ENCODE measurements at regions of chr17 and their contacts with region 1.

Region 1: GRCh38 chr17:71535026-71535720 is 585.6 kb upstream of the SOX9 start:
- DNase-seq: no peak
- ATAC-seq: no peak
- H3K4me3 ChIP-seq: no peak overlapping the region
- H3K27ac ChIP-seq: no peak overlapping the region
- H3K4me1 ChIP-seq: no peaks in the 10 kb centered on the region
- H3K27me3 ChIP-seq: peaks cover 0 to 4% (median 0%) of the 10 kb centered on the region in 3 donors
- CTCF ChIP-seq: no peak
- POLR2A ChIP-seq: no peak

Region 2: DNA sequence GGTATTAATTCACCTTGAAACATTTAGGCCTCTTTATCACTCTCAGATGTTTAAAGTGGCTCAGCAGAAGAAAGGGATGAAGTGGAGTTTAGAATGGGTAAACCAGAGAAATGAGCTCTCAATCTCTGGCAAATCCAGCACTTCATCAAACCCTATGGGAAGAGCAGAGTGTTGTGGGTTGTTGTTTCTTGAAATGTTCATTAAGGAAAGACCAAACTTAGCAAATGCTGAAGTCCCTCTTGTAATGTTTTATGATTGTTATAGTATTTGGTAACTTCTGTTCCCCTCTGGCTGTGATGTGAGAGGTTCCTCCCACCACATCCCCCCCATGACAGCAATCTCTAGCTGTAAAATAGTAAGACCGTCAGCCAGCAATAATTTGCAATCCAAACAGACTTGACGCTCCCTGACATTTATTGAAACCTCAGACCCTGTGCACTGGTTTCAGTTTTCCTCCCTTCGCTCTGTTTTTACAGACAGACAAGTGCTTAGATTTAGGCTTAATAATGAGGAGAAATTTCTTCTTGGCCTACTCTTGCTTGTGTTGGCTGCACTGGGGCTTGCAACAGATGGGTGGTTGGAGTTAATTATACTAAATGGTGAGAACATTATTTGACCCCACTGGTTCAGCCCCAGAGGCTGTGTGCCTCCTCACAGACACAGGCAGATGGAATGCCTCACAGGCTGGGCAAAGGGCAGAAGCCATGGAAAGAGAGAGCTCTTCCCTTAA is 23.7 kb before region 1 on chr17:
- in situ Hi-C with region 1: no loop called
- intact Hi-C with region 1: loop called (anchors 1 kb)
- DNase-seq: no peak
- ATAC-seq: no peak
- H3K4me3 ChIP-seq: no peak overlapping the region
- H3K27ac ChIP-seq: no peak overlapping the region
- H3K4me1 ChIP-seq: no peaks in the 10 kb centered on the region
- H3K27me3 ChIP-seq: no peaks in the 10 kb centered on the region
- CTCF ChIP-seq: no peak
- POLR2A ChIP-seq: no peak

Measured in gastrocnemius medialis (tissue), 4 donors.